CD4-positive, alpha-beta T cell (primary cell): ENCODE measurements at regions of chr10 and their contacts with region 1.

Region 1: DNA sequence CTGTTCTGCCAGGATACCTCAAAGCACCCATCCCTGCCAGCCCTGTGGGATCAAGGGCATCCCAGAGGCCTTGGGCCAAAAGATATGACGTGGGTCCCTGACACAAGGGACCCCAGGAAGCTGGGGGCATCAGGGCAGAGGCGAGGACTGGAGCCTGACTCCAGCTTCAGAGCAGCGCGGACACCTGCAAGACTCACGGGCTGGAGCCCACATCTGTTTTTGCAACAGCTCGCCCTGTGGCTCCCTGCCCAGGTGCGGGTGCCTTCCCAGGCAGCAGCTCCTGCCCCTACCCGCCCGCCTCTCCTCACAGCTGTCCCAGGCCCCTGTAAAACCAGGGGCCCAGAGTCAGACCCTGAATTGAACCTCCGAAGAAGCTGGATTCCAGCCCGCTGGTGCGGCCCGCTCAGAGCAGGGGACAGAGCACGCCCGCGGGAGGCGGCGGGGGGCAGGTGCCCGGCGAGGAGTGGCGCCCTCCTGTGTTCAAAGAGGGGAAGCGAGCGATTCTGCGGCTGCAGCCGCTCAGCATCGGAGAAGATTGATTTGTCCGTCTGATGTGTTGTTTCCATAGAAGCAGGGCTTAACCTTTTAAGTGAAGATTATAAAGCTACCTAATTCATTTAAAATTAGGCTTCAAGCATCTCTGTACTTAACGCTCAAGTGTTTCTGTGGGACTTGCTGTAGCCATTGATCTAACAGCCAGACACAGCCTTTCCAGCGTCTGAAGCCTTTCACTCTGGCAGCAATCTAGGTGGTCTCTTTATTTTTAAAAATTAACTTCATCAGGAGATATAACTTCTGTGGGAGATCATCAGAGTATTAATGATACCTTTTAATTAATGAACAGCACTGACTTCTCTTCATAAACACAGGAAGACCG is 88.4 kb downstream of the BEND7 start:
- DNase-seq: peak; percentile 50 to 77 (median 60)
- ATAC-seq: peak; percentile 95
- H3K4me3 ChIP-seq: peak overlapping the region; percentile 49
- H3K4me3 Mint-ChIP-seq: peak overlapping the region; percentile 67
- H3K27ac ChIP-seq: no peak overlapping the region
- H3K27ac Mint-ChIP-seq: no peak overlapping the region
- H3K4me1 ChIP-seq: peaks cover 14% of the 10 kb centered on the region
- H3K4me1 Mint-ChIP-seq: peaks cover 12% of the 10 kb centered on the region
- H3K27me3 ChIP-seq: peaks cover 29 to 35% of the 10 kb centered on the region in 2 experiments
- H3K27me3 Mint-ChIP-seq: peaks cover 74% of the 10 kb centered on the region
- CTCF ChIP-seq: peak; percentile 83

Region 2: DNA sequence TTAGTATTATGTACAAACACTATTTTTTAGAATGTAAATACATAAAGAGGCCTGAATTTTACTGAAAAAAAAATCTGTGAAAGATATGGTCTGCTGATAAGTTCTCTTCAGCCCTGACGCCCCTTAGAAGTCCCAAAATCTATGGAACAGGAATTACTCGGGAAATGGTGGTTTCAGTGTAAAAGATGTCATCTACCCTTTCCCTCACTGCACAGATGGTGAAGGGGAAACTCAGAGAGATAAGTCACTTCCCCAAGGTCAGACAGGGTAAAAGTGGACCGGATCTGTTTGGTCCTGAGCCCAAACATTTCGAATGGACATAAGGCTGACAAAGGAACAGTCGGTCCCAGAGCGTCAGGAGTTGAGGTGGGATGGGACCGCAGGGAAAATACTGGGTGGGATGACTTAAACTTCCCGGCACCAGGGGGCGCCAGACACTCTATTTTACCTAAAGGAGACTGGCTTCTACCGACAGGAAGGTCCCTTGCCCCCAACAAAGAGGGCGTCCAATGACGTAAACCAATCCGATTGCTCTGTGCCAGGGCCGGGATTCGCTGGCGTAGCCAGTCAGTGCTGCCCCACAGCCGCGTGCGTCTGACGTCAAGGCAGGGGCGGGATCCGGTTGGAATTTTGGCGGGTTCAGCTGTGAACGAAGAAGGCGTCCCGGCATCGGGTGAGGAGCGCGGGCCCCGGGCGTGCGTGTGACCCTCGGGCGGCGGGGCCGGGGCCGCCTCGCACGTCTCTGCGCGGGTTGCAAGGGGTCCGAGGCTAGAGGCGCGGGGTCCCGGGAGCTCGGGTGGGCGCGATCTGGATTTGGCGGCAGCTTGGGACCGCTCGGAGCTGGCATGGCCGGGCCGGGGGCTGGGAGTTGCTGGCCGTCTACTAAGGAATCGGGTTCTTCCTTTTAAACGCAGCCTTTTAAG is 279.2 kb before region 1 on chr10 and contains the start of gene MCM10:
- CTCF ChIA-PET with region 1: no interaction called
- POLR2A ChIA-PET with region 1: no interaction called
- intact Hi-C with region 1: loop called (anchors 1 to 5 kb)
- DNase-seq: peak; percentile 93 to 99 (median 96)
- ATAC-seq: peak; percentile 100
- H3K4me3 ChIP-seq: peak within 1 kb of the TSS; percentile 53
- H3K4me3 Mint-ChIP-seq: peak within 1 kb of the TSS; percentile 91
- H3K27ac ChIP-seq: peak within 1 kb of the TSS in 1 of 2 donors; percentile 24
- H3K27ac Mint-ChIP-seq: peak within 1 kb of the TSS; percentile 72
- H3K4me1 ChIP-seq: peaks cover 12% of the 10 kb centered on the region
- H3K4me1 Mint-ChIP-seq: peaks cover 16% of the 10 kb centered on the region
- H3K27me3 ChIP-seq: no peaks in the 10 kb centered on the region
- H3K27me3 Mint-ChIP-seq: no peaks in the 10 kb centered on the region
- CTCF ChIP-seq: peak; percentile 94
- total RNA-seq, gene MCM10: 0.16 to 0.50 TPM

Region 3: GRCh38 chr10:13371897-13372470 is 68.4 kb before region 1 on chr10:
- CTCF ChIA-PET with region 1: interaction called, 20 read pairs
- POLR2A ChIA-PET with region 1: no interaction called
- intact Hi-C with region 1: loop called (anchors 1 kb)
- DNase-seq: peak; percentile 18 to 88 (median 56)
- ATAC-seq: peak; percentile 100
- H3K4me3 ChIP-seq: no peak overlapping the region
- H3K4me3 Mint-ChIP-seq: no peak overlapping the region
- H3K27ac ChIP-seq: no peak overlapping the region
- H3K27ac Mint-ChIP-seq: no peak overlapping the region
- H3K4me1 ChIP-seq: no peaks in the 10 kb centered on the region
- H3K4me1 Mint-ChIP-seq: peaks cover 6% of the 10 kb centered on the region
- H3K27me3 ChIP-seq: no peaks in the 10 kb centered on the region
- H3K27me3 Mint-ChIP-seq: peaks cover 3% of the 10 kb centered on the region
- CTCF ChIP-seq: peak; percentile 79

Region 4: GRCh38 chr10:14244147-14244546 is 803.7 kb after region 1 on chr10:
- CTCF ChIA-PET with region 1: no interaction called
- POLR2A ChIA-PET with region 1: no interaction called
- intact Hi-C with region 1: no loop called
- DNase-seq: no peak
- ATAC-seq: no peak
- H3K4me3 ChIP-seq: no peak overlapping the region
- H3K4me3 Mint-ChIP-seq: no peak overlapping the region
- H3K27ac ChIP-seq: no peak overlapping the region
- H3K27ac Mint-ChIP-seq: no peak overlapping the region
- H3K4me1 ChIP-seq: no peaks in the 10 kb centered on the region
- H3K4me1 Mint-ChIP-seq: peaks cover 6% of the 10 kb centered on the region
- H3K27me3 ChIP-seq: peaks cover 0 to 8% of the 10 kb centered on the region in 2 experiments
- H3K27me3 Mint-ChIP-seq: peaks cover 49% of the 10 kb centered on the region
- CTCF ChIP-seq: no peak